ENCODE measurements at regions of chr3 and their contacts with region 1.

Region 1: DNA sequence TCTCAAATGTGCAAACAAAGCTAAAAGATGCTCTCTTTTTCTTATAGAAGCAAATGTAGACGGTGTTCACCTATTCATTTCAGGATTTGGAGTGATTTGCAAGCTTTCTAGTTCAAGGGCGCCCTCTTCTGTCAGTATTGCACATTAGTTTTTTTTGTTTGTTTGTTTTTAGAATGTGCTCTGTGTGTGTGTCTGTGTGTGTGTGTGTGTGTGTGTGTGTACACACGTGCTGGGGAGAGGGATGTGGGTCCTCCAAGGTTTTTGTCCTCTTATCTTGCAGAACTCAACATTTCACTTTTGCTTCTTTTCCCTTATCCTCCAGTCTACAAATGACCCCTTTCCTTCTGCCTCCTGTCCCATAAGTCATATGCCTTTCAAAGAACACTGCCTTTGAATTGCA is 23.5 kb downstream of the DNAH1 start:
- DNase-seq: peak; percentile 34
- ATAC-seq: peak; percentile 83
- H3K4me3 ChIP-seq: no peak overlapping the region
- H3K27ac ChIP-seq: no peak overlapping the region
- H3K4me1 ChIP-seq: peaks cover 7% of the 10 kb centered on the region; the same call in 1 of the 2 replicates
- H3K27me3 ChIP-seq: no peaks in the 10 kb centered on the region
- CTCF ChIP-seq: peak; percentile 60 to 77 (median 62)
- EP300 ChIP-seq: no peak
- POLR2A ChIP-seq: no peak
- RAD21 ChIP-seq: peak; percentile 99

Region 2: DNA sequence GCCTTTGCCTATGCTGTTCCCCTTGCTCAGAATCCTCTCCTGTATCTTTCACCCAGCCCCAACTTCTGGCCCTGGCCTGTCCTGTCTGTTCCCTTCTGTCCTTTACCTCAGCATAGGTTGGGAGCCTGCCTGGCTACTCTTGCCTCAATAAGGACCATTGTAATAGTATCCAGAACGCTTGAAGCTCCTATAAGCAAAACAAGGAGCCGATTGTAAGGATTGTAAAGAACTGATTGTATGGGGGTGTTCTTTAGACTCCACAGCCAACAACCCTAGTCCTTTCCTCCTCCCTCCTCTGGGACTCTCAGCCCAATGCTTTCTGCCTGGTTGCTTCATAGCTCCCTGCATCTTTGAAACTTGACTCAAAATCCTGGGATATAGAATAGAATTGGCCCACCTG is 819.8 kb before region 1 on chr3:
- CTCF ChIA-PET with region 1: no interaction called
- POLR2A ChIA-PET with region 1: no interaction called
- RAD21 ChIA-PET with region 1: no interaction called
- SMC1A ChIA-PET with region 1: no interaction called
- in situ Hi-C with region 1: no loop called
- intact Hi-C with region 1: no loop called
- DNase-seq: no peak
- ATAC-seq: no peak
- H3K4me3 ChIP-seq: no peak overlapping the region
- H3K27ac ChIP-seq: no peak overlapping the region
- H3K4me1 ChIP-seq: no peaks in the 10 kb centered on the region; the same call in 1 of the 2 replicates
- H3K27me3 ChIP-seq: no peaks in the 10 kb centered on the region
- CTCF ChIP-seq: no peak
- EP300 ChIP-seq: no peak
- POLR2A ChIP-seq: no peak
- RAD21 ChIP-seq: no peak

Region 3: DNA sequence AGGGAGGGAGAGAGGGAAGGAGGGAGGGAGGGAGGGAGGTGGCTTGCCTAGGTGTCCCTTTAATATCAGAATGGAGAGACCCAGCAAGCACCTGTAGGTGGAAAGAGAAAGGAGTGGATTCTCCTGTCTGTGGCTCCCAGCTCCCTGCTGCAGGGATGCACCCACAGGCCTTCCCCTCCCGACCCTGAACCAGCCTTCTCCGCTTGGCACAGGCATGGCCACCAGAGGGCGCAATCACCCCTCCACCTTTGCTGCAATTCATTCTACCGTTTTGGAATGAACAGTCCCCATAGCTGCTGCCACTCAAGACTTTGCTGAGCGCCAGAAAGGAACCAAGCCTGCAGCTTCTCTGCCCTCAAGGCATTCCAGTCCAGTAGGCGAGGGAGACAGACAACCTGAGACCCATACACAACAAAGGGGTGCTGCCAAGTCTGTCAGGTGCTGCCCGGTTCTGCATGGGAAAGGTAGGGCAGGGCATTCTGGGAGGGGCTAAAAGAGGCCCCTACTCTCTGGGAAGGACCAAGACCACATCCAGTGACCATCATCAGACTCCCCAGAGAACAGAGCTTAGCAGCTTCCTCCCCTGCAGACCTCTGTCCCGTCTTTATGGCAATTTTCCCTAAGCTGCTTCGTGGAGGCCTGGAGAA is 119.1 kb before region 1 on chr3:
- CTCF ChIA-PET with region 1: interaction called, 129 read pairs
- POLR2A ChIA-PET with region 1: interaction called, 3 read pairs
- RAD21 ChIA-PET with region 1: interaction called, 53 read pairs
- SMC1A ChIA-PET with region 1: interaction called, 112 read pairs
- in situ Hi-C with region 1: no loop called
- intact Hi-C with region 1: loop called (anchors 1 kb)
- DNase-seq: no peak
- ATAC-seq: peak; percentile 95
- H3K4me3 ChIP-seq: no peak overlapping the region
- H3K27ac ChIP-seq: no peak overlapping the region
- H3K4me1 ChIP-seq: peaks cover 25% of the 10 kb centered on the region
- H3K27me3 ChIP-seq: no peaks in the 10 kb centered on the region
- CTCF ChIP-seq: peak; percentile 92 to 96 (median 93)
- EP300 ChIP-seq: no peak
- POLR2A ChIP-seq: no peak
- RAD21 ChIP-seq: peak; percentile 83

Region 4: DNA sequence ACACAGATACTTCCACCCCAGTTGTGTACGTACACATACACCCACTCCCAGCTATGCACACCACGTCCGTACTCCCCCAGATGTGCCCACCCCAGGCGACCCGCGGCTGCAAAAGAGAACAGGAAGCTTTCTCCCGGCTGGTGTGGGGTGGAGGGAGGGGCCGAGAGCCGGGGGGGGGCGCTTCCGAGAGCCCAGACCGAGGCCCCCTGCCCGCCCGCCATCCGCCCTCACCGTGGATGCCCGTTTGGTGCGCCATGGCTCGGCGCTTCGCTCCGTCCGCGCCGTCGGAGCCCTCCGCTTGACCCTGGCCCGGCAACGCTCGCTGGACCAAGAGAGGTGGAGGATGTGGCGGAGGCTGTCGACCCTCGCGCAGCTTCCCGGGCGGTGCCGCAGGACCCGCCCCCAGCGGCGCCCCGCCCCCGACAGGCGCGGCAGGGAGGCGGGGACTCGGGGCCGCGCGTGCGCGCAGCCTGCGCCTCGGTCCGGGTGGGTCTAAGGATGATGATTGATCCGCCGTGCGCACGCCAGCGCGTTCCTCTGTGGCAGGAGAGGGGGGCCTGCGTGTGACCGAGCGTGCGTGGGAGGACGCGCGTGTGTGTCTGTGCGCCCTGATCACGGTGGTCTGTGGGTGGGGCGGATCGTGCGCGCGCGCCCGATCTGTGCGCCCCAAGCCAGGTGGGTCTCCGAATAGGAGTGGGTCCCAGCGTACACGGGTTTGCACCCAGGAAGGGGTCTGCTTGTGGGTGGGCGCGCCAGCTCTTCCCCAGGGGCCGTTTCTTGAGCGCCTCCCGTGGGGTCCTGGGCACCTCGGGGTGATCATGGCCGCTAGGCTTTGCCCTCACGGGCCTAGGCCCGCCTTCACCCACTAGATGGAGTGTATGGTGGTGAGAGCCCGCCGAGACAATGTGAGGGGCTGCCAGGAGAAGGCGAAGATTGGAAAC is 100.6 kb before region 1 on chr3 and contains the start of gene TWF2:
- CTCF ChIA-PET with region 1: interaction called, 20 read pairs
- POLR2A ChIA-PET with region 1: interaction called, 7 read pairs
- RAD21 ChIA-PET with region 1: interaction called, 10 read pairs
- SMC1A ChIA-PET with region 1: interaction called, 18 read pairs
- in situ Hi-C with region 1: loop called (anchors 5 kb)
- intact Hi-C with region 1: loop called (anchors 1 kb)
- DNase-seq: no peak
- ATAC-seq: peak; percentile 87
- H3K4me3 ChIP-seq: peak within 1 kb of the TSS; percentile 93
- H3K27ac ChIP-seq: peak within 1 kb of the TSS; percentile 88
- H3K4me1 ChIP-seq: peaks cover 40% of the 10 kb centered on the region
- H3K27me3 ChIP-seq: no peaks in the 10 kb centered on the region
- CTCF ChIP-seq: peak; percentile 43 to 49 (median 43)
- EP300 ChIP-seq: no peak
- POLR2A ChIP-seq: peak; percentile 91
- RAD21 ChIP-seq: peak; percentile 30; the same call in 1 of the 2 replicates
- polyA plus RNA-seq, gene TWF2: 0.16 to 3.4 TPM

Region 5: DNA sequence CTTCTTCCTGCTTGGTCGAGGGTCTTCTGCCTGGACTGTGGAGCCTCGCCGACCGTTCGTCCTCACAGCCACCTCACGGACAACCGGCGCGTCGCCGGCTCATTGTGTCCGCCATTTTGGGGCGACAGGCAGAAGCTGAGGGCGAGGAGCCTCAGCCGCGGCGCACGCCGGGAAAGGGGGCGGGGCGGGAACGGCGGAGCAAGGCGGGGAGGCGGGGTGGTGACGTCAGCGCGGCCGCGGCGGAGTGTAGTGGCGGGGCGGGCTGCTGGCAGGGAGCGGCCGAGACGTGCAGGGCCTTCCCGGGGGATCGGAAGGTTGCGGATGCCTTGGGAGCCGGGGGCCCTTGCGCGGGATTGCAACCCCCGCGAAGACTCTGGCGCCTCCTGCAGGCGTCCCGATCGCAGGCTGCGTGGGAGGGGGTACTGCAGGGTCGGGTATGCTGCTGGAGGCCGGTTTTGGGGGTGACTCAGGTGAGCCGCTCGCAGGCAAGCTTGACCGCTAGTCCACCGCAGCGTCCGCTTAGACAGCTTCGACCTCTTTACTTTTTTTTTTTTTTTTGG is 61.0 kb before region 1 on chr3 and contains the start of gene WDR82:
- CTCF ChIA-PET with region 1: interaction called, 451 read pairs
- POLR2A ChIA-PET with region 1: interaction called, 3 read pairs
- RAD21 ChIA-PET with region 1: interaction called, 6 read pairs
- SMC1A ChIA-PET with region 1: interaction called, 18 read pairs
- in situ Hi-C with region 1: no loop called
- intact Hi-C with region 1: no loop called
- DNase-seq: peak; percentile 67
- ATAC-seq: peak; percentile 84
- H3K4me3 ChIP-seq: peak within 1 kb of the TSS; percentile 91
- H3K27ac ChIP-seq: peak within 1 kb of the TSS; percentile 82
- H3K4me1 ChIP-seq: no peaks in the 10 kb centered on the region; the same call in 1 of the 2 replicates
- H3K27me3 ChIP-seq: no peaks in the 10 kb centered on the region
- CTCF ChIP-seq: peak; percentile 33 to 46 (median 43); a peak in 5 of 6 replicates
- EP300 ChIP-seq: no peak
- POLR2A ChIP-seq: peak; percentile 100
- RAD21 ChIP-seq: peak; percentile 37
- polyA plus RNA-seq, gene WDR82: 10.4 to 12.5 TPM

Region 6: DNA sequence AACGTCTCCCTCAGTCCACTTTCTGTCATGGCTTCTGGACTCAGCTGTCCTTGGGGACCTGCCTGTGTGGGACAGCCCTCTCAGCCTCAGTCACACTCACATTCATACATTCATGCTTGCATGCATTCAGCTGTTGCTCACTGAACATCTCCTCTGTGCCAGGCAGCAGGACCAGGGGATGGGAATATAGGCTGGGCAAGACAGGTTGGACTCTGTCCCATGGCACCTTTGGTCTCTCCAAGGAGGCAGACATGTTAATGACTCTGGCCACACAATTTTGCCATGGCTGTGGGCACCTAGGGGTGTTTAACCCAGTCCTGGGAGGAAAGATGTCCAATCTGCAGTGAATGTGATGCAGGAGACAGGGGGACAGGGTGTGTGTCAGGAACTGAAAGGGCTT is 31.3 kb before region 1 on chr3:
- CTCF ChIA-PET with region 1: interaction called, 60 read pairs
- POLR2A ChIA-PET with region 1: interaction called, 8 read pairs
- RAD21 ChIA-PET with region 1: interaction called, 5 read pairs
- SMC1A ChIA-PET with region 1: interaction called, 6 read pairs
- in situ Hi-C with region 1: no loop called
- intact Hi-C with region 1: no loop called
- DNase-seq: no peak
- ATAC-seq: no peak
- H3K4me3 ChIP-seq: no peak overlapping the region
- H3K27ac ChIP-seq: no peak overlapping the region
- H3K4me1 ChIP-seq: peaks cover 44% of the 10 kb centered on the region
- H3K27me3 ChIP-seq: no peaks in the 10 kb centered on the region
- CTCF ChIP-seq: no peak
- EP300 ChIP-seq: no peak
- POLR2A ChIP-seq: no peak
- RAD21 ChIP-seq: no peak

Region 7: GRCh38 chr3:52385157-52385556 is 45.5 kb after region 1 on chr3:
- CTCF ChIA-PET with region 1: interaction called, 21 read pairs
- POLR2A ChIA-PET with region 1: no interaction called
- RAD21 ChIA-PET with region 1: interaction called, 8 read pairs
- SMC1A ChIA-PET with region 1: interaction called, 8 read pairs
- in situ Hi-C with region 1: no loop called
- intact Hi-C with region 1: no loop called
- DNase-seq: no peak
- ATAC-seq: peak; percentile 90
- H3K4me3 ChIP-seq: no peak overlapping the region
- H3K27ac ChIP-seq: no peak overlapping the region
- H3K4me1 ChIP-seq: no peaks in the 10 kb centered on the region; the same call in 1 of the 2 replicates
- H3K27me3 ChIP-seq: no peaks in the 10 kb centered on the region
- CTCF ChIP-seq: peak; percentile 59 to 73 (median 72)
- EP300 ChIP-seq: no peak
- POLR2A ChIP-seq: no peak
- RAD21 ChIP-seq: peak; percentile 55

Measured in GM12878 (cell line).